ENCODE measurements at regions of chr18 and their contacts with region 1.

Region 1: DNA sequence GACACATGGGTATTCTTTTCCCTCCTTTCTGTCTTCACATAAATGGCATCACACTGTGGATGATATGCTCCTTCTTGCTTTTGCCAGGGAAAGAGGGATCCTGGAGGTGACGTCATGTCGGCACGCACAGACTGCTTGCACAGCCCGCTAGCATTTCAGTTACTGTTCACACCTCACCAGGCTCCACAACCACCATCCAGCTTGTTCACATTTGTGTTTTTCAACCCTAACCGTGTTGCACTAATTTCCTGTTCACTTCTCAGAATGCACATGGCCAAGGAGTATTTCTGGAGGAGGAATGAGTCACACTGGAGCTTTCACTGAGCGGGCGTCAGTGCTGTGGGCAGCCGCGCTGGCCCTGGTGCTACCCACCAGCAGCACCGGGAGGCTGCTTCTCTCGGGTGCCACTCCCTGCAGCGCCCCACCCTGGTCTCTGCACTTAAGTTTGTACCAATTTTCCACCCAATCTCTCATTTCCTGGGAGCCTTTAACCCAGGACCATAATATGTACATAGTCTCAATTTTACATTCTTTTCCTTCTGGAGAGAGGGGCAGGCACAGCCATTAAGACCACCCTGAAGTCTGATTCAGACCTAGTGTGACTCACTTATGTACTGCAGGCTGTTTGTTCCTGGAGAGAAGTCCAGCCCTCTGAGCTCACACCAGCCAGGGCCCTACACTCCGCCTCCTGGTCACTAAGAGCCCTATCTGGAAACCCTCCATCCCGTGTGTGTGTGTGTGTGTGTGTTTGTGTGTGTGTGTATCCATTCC is 65.1 kb downstream of the MBP start:
- DNase-seq: peak in 4 of 5 donors; percentile 53 to 80 (median 63)
- H3K4me3 ChIP-seq: peak overlapping the region; percentile 27
- H3K4me3 Mint-ChIP-seq: peak overlapping the region; percentile 71 to 87 (median 79)
- H3K27ac ChIP-seq: peak overlapping the region; percentile 62
- H3K27ac Mint-ChIP-seq: peak overlapping the region; percentile 93 to 98 (median 97)
- H3K4me1 ChIP-seq: peaks cover 100% of the 10 kb centered on the region
- H3K4me1 Mint-ChIP-seq: peaks cover 99 to 100% (median 100%) of the 10 kb centered on the region in 3 donors
- H3K27me3 ChIP-seq: no peaks in the 10 kb centered on the region
- H3K27me3 Mint-ChIP-seq: peaks cover 0 to 2% of the 10 kb centered on the region in 2 donors

Region 2: GRCh38 chr18:77079954-77080682 is 12.6 kb after region 1 on chr18:
- CTCF ChIA-PET with region 1: interaction called, 10 read pairs
- POLR2A ChIA-PET with region 1: interaction called, 5 read pairs
- DNase-seq: peak in 3 of 5 donors; percentile 38 to 66 (median 57)
- H3K4me3 ChIP-seq: no peak overlapping the region
- H3K4me3 Mint-ChIP-seq: peak overlapping the region; percentile 37 to 86 (median 74)
- H3K27ac ChIP-seq: no peak overlapping the region
- H3K27ac Mint-ChIP-seq: peak overlapping the region; percentile 87 to 96 (median 90)
- H3K4me1 ChIP-seq: peaks cover 43% of the 10 kb centered on the region
- H3K4me1 Mint-ChIP-seq: peaks cover 78 to 99% (median 94%) of the 10 kb centered on the region in 3 donors
- H3K27me3 ChIP-seq: no peaks in the 10 kb centered on the region
- H3K27me3 Mint-ChIP-seq: no peaks in the 10 kb centered on the region

Region 3: DNA sequence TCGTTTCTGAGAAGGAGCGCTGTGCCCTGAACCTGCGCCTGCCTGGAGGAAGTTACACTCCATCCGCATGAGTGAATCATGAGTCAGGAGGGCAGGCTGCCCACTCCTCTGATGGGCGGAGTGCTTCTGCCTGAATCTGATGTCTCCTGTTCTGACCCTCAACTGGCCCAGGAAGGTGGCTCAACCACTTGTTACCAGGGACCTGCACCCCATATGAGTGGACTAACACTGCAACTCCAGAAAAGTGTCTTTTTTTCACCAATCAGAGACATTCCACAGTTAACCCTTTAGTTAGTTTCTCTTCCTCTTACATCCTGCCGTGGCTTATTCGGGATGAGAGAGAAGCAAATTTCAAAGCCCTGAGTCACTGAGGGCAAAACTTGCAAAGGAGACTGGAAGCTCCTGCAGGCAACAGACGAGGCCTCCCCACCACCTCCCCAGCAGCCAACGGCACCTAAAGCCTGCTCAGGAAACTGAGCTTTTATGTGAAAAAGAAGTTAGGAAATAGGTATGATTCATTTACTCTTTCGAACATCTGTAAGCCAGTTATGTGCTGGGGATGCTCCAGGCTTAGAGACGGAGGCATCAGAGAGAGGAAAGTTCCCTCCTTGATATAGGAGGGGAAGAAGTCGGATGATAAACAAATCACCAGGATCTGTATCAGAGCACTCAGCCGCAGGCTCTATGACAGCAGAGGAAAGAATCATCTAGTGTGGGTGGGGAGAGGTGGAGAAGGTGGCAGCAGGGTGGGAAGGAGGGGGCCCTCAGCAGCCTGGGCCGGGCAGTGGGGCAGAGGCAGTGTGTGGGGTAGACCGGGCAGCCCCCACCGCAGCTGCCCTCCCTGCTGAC is 34.2 kb after region 1 on chr18:
- CTCF ChIA-PET with region 1: interaction called, 11 read pairs
- POLR2A ChIA-PET with region 1: interaction called, 22 read pairs
- DNase-seq: peak in 4 of 5 donors; percentile 23 to 63 (median 38)
- H3K4me3 ChIP-seq: peak overlapping the region; percentile 42
- H3K4me3 Mint-ChIP-seq: peak overlapping the region; percentile 73 to 87 (median 80)
- H3K27ac ChIP-seq: peak overlapping the region; percentile 55
- H3K27ac Mint-ChIP-seq: peak overlapping the region; percentile 93 to 98 (median 96)
- H3K4me1 ChIP-seq: peaks cover 99% of the 10 kb centered on the region
- H3K4me1 Mint-ChIP-seq: peaks cover 90 to 100% (median 100%) of the 10 kb centered on the region in 3 donors
- H3K27me3 ChIP-seq: no peaks in the 10 kb centered on the region
- H3K27me3 Mint-ChIP-seq: no peaks in the 10 kb centered on the region

Measured in CD8-positive, alpha-beta memory T cell (primary cell).